ENCODE measurements at regions of chr3 and their contacts with region 1.

Region 1: GRCh38 chr3:153026026-153026425 is 136.0 kb upstream of the RAP2B start:
- DNase-seq: no peak
- ATAC-seq: no peak
- H3K4me3 ChIP-seq: no peak overlapping the region
- H3K27ac ChIP-seq: no peak overlapping the region
- H3K4me1 ChIP-seq: no peaks in the 10 kb centered on the region
- H3K27me3 ChIP-seq: no peaks in the 10 kb centered on the region
- CTCF ChIP-seq: peak in 4 of 5 experiments; percentile 33 to 54 (median 34)
- POLR2A ChIP-seq: no peak

Region 2: GRCh38 chr3:153595186-153595815 is 569.3 kb after region 1 on chr3:
- in situ Hi-C with region 1: loop called in 3 of 4 experiments (anchors 25 kb)
- intact Hi-C with region 1: no loop called
- DNase-seq: no peak
- ATAC-seq: no peak
- H3K4me3 ChIP-seq: no peak overlapping the region
- H3K27ac ChIP-seq: no peak overlapping the region
- H3K4me1 ChIP-seq: peaks cover 0 to under 1% of the 10 kb centered on the region in 2 donors
- H3K27me3 ChIP-seq: no peaks in the 10 kb centered on the region
- CTCF ChIP-seq: peak in 2 of 5 experiments; percentile 22 to 39
- POLR2A ChIP-seq: no peak

Region 3: GRCh38 chr3:153768561-153769469 is 742.8 kb after region 1 on chr3:
- in situ Hi-C with region 1: loop called in 1 of 4 experiments (anchors 25 kb)
- intact Hi-C with region 1: loop called (anchors 5 kb)
- DNase-seq: no peak
- ATAC-seq: no peak
- H3K4me3 ChIP-seq: no peak overlapping the region
- H3K27ac ChIP-seq: no peak overlapping the region
- H3K4me1 ChIP-seq: no peaks in the 10 kb centered on the region
- H3K27me3 ChIP-seq: no peaks in the 10 kb centered on the region
- CTCF ChIP-seq: peak in 4 of 5 experiments; percentile 37 to 63 (median 57)
- POLR2A ChIP-seq: no peak

Region 4: DNA sequence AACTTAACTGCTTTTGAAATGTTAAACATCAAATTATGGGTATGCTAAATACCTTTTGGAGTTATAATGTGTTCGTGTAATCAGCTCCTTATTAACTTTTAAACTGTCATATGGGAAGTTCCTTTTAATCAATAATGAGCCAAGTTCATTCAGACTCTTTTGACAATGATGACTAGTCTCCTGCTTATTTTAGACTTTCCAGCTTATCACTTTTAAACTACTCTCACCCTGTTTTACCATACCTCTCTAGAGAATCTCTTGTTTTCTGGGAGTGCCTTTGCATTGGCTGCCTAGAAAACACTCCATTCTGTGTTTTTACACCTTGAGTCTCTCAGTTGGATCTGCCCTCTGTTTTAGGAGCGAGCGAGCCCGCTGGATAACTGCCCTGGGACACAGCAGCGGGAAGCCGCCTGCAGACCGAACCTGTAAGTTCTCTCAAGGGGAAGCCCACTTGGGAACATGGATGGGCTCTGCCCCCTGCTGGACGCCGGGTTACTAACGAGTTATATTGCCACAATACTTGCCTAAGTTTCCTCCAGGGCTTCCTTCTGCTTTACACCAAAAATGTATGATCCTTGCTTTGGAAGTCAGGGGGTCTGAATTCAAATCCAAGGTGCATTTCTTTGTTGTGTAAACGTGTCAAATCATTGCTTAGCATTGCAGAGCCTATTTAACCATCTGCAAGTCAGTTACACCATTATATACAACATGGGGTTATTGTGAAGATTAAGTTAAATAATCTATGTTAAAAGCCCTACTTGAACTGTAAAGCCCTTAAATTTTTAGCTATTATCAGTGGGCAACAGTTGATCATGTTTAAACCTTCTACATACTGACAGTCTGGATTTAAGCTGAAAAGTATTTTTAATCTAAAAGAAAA is 1227.0 kb after region 1 on chr3:
- in situ Hi-C with region 1: loop called in 1 of 4 experiments (anchors 25 kb)
- intact Hi-C with region 1: no loop called
- DNase-seq: peak; percentile 25 to 56
- ATAC-seq: peak in 1 of 2 donors; percentile 58
- H3K4me3 ChIP-seq: no peak overlapping the region
- H3K27ac ChIP-seq: no peak overlapping the region
- H3K4me1 ChIP-seq: no peaks in the 10 kb centered on the region
- H3K27me3 ChIP-seq: no peaks in the 10 kb centered on the region
- CTCF ChIP-seq: peak; percentile 40 to 76 (median 72)
- POLR2A ChIP-seq: no peak

Measured in gastrocnemius medialis (tissue), 4 donors.